ENCODE measurements at regions of chr11 and their contacts with region 1.

Region 1: GRCh38 chr11:14892036-14892567 is at the start of gene CYP2R1:
- DNase-seq: peak; percentile 96
- ATAC-seq: peak; percentile 99
- H3K4me3 ChIP-seq: peak within 1 kb of the TSS; percentile 68 to 89
- H3K27ac ChIP-seq: peak within 1 kb of the TSS; percentile 92
- H3K4me1 ChIP-seq: peaks cover 5% of the 10 kb centered on the region
- H3K27me3 ChIP-seq: no peaks in the 10 kb centered on the region
- CTCF ChIP-seq: no peak; the same call in 1 of the 2 replicates
- total RNA-seq, gene CYP2R1: 11.2 TPM

Region 2: DNA sequence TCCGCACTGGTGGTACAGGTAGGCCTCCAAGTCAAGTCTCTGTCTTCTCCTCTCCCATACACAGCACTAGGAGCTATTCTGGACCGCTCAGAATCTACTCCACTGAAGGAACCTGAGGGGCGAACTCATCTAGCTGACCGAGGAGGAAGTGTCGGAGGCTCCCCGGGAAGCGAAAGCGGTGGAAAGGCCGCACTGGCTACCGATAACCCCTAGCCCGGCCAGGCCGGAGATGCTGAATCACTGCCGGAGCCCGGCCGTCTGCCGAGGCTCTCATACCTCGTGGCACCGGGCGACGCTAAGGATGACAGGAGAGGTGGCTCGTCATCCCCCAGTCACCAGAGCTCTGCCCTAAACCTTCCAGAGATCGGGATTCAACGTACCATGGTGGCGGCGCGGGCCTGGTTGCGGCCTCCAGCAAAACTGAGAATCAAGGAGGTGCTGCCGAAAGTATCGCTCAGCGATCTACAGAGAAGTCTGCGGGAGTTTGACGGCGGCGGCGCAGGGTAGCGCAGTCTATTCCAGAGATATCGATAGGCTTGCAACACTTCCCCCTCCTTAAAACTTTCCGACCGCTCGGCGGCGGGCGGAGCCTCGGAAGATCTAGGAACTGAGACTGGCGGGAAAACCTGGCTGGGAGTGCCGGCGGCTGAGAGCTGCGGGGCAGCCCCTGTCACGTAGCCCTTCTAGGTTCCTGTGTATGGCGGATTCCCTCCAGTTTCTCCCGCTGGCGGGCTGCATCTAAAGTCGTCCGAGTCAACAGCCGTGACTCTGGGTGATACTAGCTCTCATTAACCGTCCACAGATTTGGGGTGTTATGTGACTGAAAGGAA is 372.0 kb before region 1 on chr11 and contains the start of gene PSMA1:
- CTCF ChIA-PET with region 1: no interaction called
- POLR2A ChIA-PET with region 1: no interaction called
- in situ Hi-C with region 1: no loop called
- intact Hi-C with region 1: loop called (anchors 5 kb)
- DNase-seq: peak; percentile 79
- ATAC-seq: peak; percentile 98
- H3K4me3 ChIP-seq: peak within 1 kb of the TSS; percentile 91 to 92
- H3K27ac ChIP-seq: peak within 1 kb of the TSS; percentile 99
- H3K4me1 ChIP-seq: peaks cover 11% of the 10 kb centered on the region; the same call in 1 of the 2 replicates
- H3K27me3 ChIP-seq: no peaks in the 10 kb centered on the region
- CTCF ChIP-seq: no peak
- total RNA-seq, gene PSMA1: 198 TPM

Region 3: GRCh38 chr11:14703731-14704130 is 188.4 kb before region 1 on chr11:
- CTCF ChIA-PET with region 1: no interaction called
- POLR2A ChIA-PET with region 1: no interaction called
- in situ Hi-C with region 1: no loop called
- intact Hi-C with region 1: no loop called
- DNase-seq: no peak
- ATAC-seq: no peak
- H3K4me3 ChIP-seq: no peak overlapping the region
- H3K27ac ChIP-seq: no peak overlapping the region
- H3K4me1 ChIP-seq: no peaks in the 10 kb centered on the region; the same call in 1 of the 2 replicates
- H3K27me3 ChIP-seq: no peaks in the 10 kb centered on the region
- CTCF ChIP-seq: no peak